Dendritic cell treated with granulocyte-macrophage colony-stimulating factor and Interleukin-4, amounts not matched to agents 40 ng/mL and 50 ng/mL, for 4 days (primary cell): ENCODE measurements at regions of chr4 and their contacts with region 1.

Region 1: GRCh38 chr4:20773144-20773997 is 73.1 kb downstream of the PACRGL start:
- H3K4me3 Mint-ChIP-seq: no peak overlapping the region
- H3K27ac Mint-ChIP-seq: no peak overlapping the region
- H3K4me1 Mint-ChIP-seq: no peaks in the 10 kb centered on the region
- H3K27me3 Mint-ChIP-seq: peaks cover 1% of the 10 kb centered on the region

Region 2: GRCh38 chr4:21765810-21766407 is 992.5 kb after region 1 on chr4:
- intact Hi-C with region 1: loop called (anchors 5 kb)
- H3K4me3 Mint-ChIP-seq: no peak overlapping the region
- H3K27ac Mint-ChIP-seq: no peak overlapping the region
- H3K4me1 Mint-ChIP-seq: no peaks in the 10 kb centered on the region
- H3K27me3 Mint-ChIP-seq: peaks cover 5% of the 10 kb centered on the region